Endothelial cell of umbilical vein (primary cell): ENCODE measurements at regions of chr13 and their contacts with region 1.

Region 1: DNA sequence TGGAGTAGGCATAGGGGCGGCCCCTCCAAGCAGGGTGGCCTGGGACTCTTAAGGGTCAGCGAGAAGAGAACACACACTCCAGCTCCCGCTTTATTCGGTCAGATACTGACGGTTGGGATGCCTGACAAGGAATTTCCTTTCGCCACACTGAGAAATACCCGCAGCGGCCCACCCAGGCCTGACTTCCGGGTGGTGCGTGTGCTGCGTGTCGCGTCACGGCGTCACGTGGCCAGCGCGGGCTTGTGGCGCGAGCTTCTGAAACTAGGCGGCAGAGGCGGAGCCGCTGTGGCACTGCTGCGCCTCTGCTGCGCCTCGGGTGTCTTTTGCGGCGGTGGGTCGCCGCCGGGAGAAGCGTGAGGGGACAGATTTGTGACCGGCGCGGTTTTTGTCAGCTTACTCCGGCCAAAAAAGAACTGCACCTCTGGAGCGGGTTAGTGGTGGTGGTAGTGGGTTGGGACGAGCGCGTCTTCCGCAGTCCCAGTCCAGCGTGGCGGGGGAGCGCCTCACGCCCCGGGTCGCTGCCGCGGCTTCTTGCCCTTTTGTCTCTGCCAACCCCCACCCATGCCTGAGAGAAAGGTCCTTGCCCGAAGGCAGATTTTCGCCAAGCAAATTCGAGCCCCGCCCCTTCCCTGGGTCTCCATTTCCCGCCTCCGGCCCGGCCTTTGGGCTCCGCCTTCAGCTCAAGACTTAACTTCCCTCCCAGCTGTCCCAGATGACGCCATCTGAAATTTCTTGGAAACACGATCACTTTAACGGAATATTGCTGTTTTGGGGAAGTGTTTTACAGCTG is at the starts of genes BRCA2 and ZAR1L:
- DNase-seq: peak; percentile 86
- H3K4me3 ChIP-seq: peak within 1 kb of the TSS; percentile 37 to 96 (median 56)
- H3K27ac ChIP-seq: peak within 1 kb of the TSS; percentile 88
- H3K4me1 ChIP-seq: peaks cover 14% of the 10 kb centered on the region
- H3K27me3 ChIP-seq: no peaks in the 10 kb centered on the region
- CTCF ChIP-seq: no peak
- POLR2A ChIP-seq: peak; percentile 53
- total RNA-seq, gene BRCA2: 16.1 and 17.5 TPM in 2 replicates
- total RNA-seq, gene ZAR1L: not detected in 2 replicates

Region 2: DNA sequence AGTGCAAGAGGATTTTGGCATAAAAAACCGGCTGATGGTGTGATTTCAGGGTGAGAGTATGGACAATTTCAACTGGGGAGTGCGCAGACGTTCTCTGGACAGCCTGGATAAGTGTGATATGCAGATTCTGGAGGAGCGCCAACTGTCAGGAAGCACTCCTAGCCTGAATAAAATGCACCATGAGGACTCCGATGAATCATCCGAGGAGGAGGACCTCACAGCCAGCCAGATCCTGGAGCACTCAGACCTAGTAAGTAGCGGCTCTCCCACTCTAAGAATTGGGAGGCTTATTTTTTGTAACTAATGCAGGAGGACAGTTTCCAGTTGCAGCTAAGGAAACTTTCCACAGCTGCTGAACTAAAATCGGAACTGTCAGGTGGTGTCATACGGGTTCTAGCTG is 53.9 kb before region 1 on chr13:
- CTCF ChIA-PET with region 1: no interaction called
- POLR2A ChIA-PET with region 1: interaction called, 4 read pairs
- dilution Hi-C with region 1: no loop called
- intact Hi-C with region 1: loop called (anchors 1 kb)
- DNase-seq: peak; percentile 99
- H3K4me3 ChIP-seq: peak overlapping the region; percentile 36 to 75 (median 43)
- H3K27ac ChIP-seq: peak overlapping the region; percentile 86
- H3K4me1 ChIP-seq: peaks cover 70% of the 10 kb centered on the region
- H3K27me3 ChIP-seq: no peaks in the 10 kb centered on the region
- CTCF ChIP-seq: no peak
- POLR2A ChIP-seq: peak; percentile 87